GM12878 (cell line): ENCODE measurements at regions of chr6 and their contacts with region 1.

Region 1: DNA sequence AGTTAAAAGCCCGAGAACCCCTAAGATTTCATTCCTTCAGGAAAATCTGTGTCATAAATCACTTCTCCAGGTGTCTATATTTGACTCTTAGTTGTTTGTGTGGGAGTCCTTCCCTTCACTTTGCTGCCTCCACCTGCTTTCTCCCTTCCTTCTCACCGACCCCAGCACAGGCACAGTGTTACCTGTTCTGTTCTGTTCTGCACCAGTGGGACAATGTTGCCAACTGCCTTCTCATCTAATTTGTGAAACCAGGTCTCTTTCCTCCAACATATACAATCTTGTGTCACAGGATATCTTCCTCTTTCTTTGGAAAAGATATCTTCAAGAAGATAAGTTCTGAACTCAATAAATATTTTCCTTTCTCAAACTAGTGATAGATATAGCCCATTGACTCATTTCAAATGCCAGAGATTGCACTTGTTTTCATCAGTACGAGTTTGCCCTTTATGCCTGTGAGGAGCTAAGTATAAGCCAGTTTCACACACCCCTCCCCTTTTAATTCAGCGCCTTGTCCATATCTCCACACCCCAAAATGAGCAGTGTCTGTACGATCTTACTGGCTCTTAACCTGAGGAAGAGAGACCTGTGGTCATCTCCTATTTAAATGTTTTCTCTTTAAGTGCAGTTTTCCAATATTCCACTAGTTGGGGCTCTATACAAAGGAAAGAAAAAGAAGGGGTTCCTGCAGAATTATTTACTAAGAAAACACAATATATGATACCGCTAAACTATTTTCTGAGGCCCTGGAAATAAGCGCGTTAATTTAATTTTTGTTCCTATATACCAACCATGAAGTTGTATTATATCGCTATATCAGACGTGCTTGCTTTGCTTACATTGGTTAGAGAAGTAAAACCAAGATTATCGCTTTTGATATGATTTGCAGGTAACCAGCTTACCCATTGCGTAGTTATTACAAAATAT is 81.6 kb upstream of the PREP start:
- DNase-seq: no peak
- ATAC-seq: peak; percentile 64
- H3K4me3 ChIP-seq: no peak overlapping the region
- H3K27ac ChIP-seq: peak overlapping the region; percentile 8; the same call in 1 of the 2 replicates
- H3K4me1 ChIP-seq: peaks cover 50% of the 10 kb centered on the region
- H3K27me3 ChIP-seq: no peaks in the 10 kb centered on the region
- CTCF ChIP-seq: peak; percentile 80 to 84 (median 82)
- EP300 ChIP-seq: peak in 1 of 2 experiments; percentile 50; a peak in 2 of 4 replicates
- POLR2A ChIP-seq: no peak
- RAD21 ChIP-seq: peak; percentile 96

Region 2: DNA sequence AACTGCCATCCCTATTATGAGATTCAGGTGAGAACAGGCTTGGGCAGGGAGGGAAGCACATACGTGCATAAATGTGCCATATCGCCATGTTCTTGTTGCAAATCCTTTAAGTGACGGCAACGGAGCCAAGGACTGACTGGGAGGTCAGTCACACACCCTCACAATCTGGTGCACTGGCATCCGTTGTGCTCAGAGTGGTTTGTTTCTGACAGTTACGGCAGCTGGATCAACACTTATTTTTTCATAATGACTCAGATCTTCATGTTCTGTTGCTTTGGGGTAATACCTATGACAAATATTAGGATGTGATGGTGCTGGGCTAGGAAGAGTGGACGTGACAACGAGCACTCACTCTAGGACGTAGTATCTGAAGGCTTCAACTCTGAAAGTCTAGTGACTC is 25.5 kb before region 1 on chr6:
- CTCF ChIA-PET with region 1: interaction called, 95 read pairs
- POLR2A ChIA-PET with region 1: interaction called, 47 read pairs
- RAD21 ChIA-PET with region 1: interaction called, 184 read pairs
- SMC1A ChIA-PET with region 1: interaction called, 95 read pairs
- in situ Hi-C with region 1: no loop called
- intact Hi-C with region 1: loop called (anchors 2 kb)
- DNase-seq: peak; percentile 98
- ATAC-seq: peak; percentile 91
- H3K4me3 ChIP-seq: no peak overlapping the region
- H3K27ac ChIP-seq: peak overlapping the region; percentile 88
- H3K4me1 ChIP-seq: peaks cover 16% of the 10 kb centered on the region
- H3K27me3 ChIP-seq: no peaks in the 10 kb centered on the region
- CTCF ChIP-seq: no peak
- EP300 ChIP-seq: peak; percentile 99 to 100
- POLR2A ChIP-seq: peak; percentile 80
- RAD21 ChIP-seq: no peak

Region 3: DNA sequence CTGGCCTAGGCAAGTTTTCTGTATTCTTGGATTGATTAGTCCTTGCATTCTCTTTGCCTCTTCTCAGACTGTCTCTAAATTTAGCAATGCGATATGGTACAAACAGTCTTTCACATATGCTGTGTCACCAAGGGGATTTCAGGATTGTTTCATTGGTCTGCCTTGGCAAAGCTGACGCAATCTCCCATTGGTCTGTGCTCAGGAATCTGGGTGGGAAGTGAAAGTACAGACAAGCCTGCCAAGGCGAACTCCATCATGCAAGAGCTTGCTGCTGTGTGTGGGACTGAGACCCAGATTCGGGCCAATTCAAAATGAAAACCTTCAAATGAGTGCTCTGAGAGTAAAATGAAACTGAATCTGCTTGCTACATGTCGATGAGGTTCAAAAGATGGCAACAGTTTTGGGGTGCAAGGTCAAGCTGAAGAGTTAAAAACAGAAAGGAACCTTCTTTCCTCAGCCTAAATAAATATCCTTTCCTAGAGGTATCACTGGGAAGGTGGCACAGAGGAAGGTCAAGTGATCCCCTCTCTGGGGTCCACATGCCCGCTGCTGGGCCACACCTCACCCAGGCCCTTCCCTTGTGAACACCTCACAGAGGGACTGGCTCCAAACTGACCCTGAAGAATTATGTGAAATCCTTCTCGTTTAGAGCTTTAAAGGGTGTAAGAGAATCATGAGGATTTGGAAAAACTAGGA is 117.2 kb after region 1 on chr6:
- CTCF ChIA-PET with region 1: interaction called, 4 read pairs
- POLR2A ChIA-PET with region 1: interaction called, 4 read pairs
- RAD21 ChIA-PET with region 1: interaction called, 9 read pairs
- SMC1A ChIA-PET with region 1: interaction called, 12 read pairs
- in situ Hi-C with region 1: no loop called
- intact Hi-C with region 1: loop called (anchors 2 kb)
- DNase-seq: peak; percentile 99
- ATAC-seq: peak; percentile 92
- H3K4me3 ChIP-seq: peak overlapping the region; percentile 53; the same call in 1 of the 2 replicates
- H3K27ac ChIP-seq: peak overlapping the region; percentile 86
- H3K4me1 ChIP-seq: peaks cover 24% of the 10 kb centered on the region
- H3K27me3 ChIP-seq: no peaks in the 10 kb centered on the region
- CTCF ChIP-seq: no peak
- EP300 ChIP-seq: peak; percentile 59 to 86; a peak in 3 of 4 replicates
- POLR2A ChIP-seq: peak; percentile 50
- RAD21 ChIP-seq: peak; percentile 12; the same call in 1 of the 2 replicates

Region 4: GRCh38 chr6:105835373-105835772 is 350.9 kb after region 1 on chr6:
- CTCF ChIA-PET with region 1: interaction called, 4 read pairs
- POLR2A ChIA-PET with region 1: no interaction called
- RAD21 ChIA-PET with region 1: no interaction called
- SMC1A ChIA-PET with region 1: interaction called, 4 read pairs
- in situ Hi-C with region 1: no loop called
- intact Hi-C with region 1: loop called (anchors 5 kb)
- DNase-seq: no peak
- ATAC-seq: peak; percentile 34; the same call in 1 of the 3 replicates
- H3K4me3 ChIP-seq: no peak overlapping the region
- H3K27ac ChIP-seq: no peak overlapping the region
- H3K4me1 ChIP-seq: no peaks in the 10 kb centered on the region
- H3K27me3 ChIP-seq: no peaks in the 10 kb centered on the region; a peak in 1 of 4 replicates
- CTCF ChIP-seq: peak; percentile 8 to 34 (median 16); a peak in 2 of 6 replicates
- EP300 ChIP-seq: no peak
- POLR2A ChIP-seq: no peak
- RAD21 ChIP-seq: peak; percentile 39

Region 5: DNA sequence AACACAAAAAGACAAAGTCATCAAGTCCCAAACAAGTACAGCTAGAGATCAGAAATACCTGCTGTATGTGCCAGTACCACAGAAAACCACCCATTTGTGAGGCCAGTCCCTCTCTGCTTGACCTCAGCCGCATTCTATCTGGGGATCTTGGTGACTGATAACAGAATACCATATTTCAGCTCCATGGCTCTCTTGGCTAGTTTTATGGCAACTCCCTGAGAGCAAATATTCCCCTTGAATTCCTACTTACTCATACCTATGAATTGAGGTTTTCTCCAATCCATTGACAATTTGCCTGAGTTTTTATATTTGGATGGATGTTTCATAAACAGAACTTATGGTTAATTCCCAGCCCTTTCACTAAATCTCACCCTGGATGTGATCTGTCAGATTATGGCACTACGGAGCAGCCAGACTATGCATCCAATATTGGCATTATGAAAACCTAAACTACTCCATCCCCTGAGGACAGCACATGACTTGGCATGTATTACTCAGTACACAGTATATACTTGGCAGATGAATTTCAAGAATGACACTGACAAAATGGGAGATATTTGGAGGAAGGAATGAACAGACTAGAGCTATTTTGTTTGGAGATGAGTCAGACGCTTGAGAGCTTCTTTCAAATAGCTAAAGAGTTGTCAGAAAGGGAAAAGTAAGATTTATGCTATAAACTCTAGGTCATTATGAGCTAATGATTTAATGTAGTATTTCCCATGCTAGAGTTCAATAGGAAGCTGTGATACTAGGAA is 697.3 kb after region 1 on chr6:
- CTCF ChIA-PET with region 1: interaction called, 8 read pairs
- POLR2A ChIA-PET with region 1: no interaction called
- RAD21 ChIA-PET with region 1: interaction called, 3 read pairs
- SMC1A ChIA-PET with region 1: interaction called, 4 read pairs
- in situ Hi-C with region 1: no loop called
- intact Hi-C with region 1: loop called (anchors 10 kb)
- DNase-seq: peak; percentile 40
- ATAC-seq: peak; percentile 57
- H3K4me3 ChIP-seq: no peak overlapping the region
- H3K27ac ChIP-seq: peak overlapping the region; percentile 74
- H3K4me1 ChIP-seq: peaks cover 45% of the 10 kb centered on the region
- H3K27me3 ChIP-seq: no peaks in the 10 kb centered on the region
- CTCF ChIP-seq: no peak
- EP300 ChIP-seq: no peak
- POLR2A ChIP-seq: no peak
- RAD21 ChIP-seq: no peak